BJ (cell line): ENCODE measurements at regions of chr6 and their contacts with region 1.

Region 1: GRCh38 chr6:3251462-3252314 is 7.1 kb upstream of the PSMG4 start:
- DNase-seq: peak; percentile 26
- H3K4me3 ChIP-seq: no peak overlapping the region
- H3K27me3 ChIP-seq: no peaks in the 10 kb centered on the region
- CTCF ChIP-seq: peak; percentile 98

Region 2: GRCh38 chr6:3108746-3109414 is 142.8 kb before region 1 on chr6:
- CTCF ChIA-PET with region 1: interaction called, 5 read pairs
- POLR2A ChIA-PET with region 1: interaction called, 20 read pairs
- DNase-seq: no peak
- H3K4me3 ChIP-seq: no peak overlapping the region
- H3K27me3 ChIP-seq: no peaks in the 10 kb centered on the region
- CTCF ChIP-seq: no peak

Region 3: DNA sequence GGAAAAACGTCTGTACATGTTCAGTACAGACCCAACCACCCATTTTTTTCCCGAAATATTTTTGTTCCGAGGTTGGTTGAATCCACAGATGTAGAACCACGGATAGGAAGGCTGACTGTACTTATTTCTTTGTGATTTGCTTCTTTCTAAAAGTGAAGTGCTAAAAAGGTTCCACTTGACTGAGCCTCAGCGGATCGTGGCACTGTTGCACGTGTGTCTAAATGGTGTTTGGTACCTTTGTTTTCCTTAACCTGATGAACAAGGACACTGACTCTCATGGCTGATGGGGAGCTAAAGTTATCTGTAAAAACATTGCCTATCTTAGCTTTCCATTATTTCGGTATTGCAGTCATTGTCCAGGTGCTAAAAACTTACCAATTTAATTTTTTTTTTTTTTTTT is 127.0 kb before region 1 on chr6:
- CTCF ChIA-PET with region 1: interaction called, 11 read pairs
- POLR2A ChIA-PET with region 1: no interaction called
- DNase-seq: no peak
- H3K4me3 ChIP-seq: no peak overlapping the region
- H3K27me3 ChIP-seq: no peaks in the 10 kb centered on the region
- CTCF ChIP-seq: no peak

Region 4: DNA sequence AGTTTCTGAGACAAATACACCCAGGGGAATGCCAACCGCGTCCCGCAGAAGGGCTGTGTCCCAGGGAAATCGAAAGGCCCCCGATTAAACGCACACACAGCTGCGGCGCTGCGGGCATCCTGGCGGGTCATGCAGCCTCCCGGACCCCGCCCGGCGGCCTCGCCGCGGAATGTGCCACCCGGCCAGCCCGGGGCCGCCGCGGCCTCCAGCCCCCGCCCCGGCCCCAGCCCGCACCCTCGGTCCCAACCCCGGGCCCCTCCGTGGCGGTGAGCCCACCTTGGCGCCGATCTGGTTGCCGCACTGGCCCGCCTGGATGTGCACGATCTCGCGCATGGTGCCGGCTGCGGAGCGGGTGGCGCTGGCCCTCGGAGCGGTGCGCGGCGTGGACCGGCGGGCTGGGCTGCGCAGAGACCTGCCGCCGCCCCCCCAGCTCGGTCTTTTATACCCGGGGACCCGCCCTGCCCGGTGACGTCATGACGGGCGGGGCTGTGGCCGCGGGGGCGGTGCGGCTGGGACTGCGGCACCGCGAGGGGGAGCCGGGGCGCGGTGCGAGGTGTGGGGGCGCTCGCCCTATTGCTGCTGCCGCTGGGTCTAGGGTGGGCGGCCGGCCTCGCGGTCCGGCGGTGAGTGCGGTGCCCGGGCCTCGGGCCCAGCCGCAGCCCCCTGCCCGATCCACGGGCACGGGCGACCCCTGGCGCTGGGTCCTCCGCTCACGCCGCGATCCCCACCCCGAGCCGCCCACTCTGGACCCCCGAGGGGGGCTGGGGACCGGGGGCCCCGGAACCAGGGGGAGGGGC is 94.4 kb before region 1 on chr6 and contains the start of gene TUBB2A:
- CTCF ChIA-PET with region 1: interaction called, 17 read pairs
- POLR2A ChIA-PET with region 1: interaction called, 17 read pairs
- DNase-seq: no peak
- H3K4me3 ChIP-seq: peak within 1 kb of the TSS; percentile 95
- H3K27me3 ChIP-seq: no peaks in the 10 kb centered on the region
- CTCF ChIP-seq: peak; percentile 21; the same call in 1 of the 2 replicates
- polyA plus RNA-seq, gene TUBB2A: 138 and 184 TPM in 2 replicates

Region 5: GRCh38 chr6:3162565-3163247 is 89.0 kb before region 1 on chr6:
- CTCF ChIA-PET with region 1: interaction called, 17 read pairs
- POLR2A ChIA-PET with region 1: interaction called, 17 read pairs
- DNase-seq: no peak
- H3K4me3 ChIP-seq: peak overlapping the region; percentile 74
- H3K27me3 ChIP-seq: no peaks in the 10 kb centered on the region
- CTCF ChIP-seq: peak; percentile 33

Region 6: GRCh38 chr6:3209114-3210023 is 42.3 kb before region 1 on chr6:
- CTCF ChIA-PET with region 1: interaction called, 26 read pairs
- POLR2A ChIA-PET with region 1: interaction called, 7 read pairs
- DNase-seq: peak; percentile 98
- H3K4me3 ChIP-seq: no peak overlapping the region
- H3K27me3 ChIP-seq: no peaks in the 10 kb centered on the region
- CTCF ChIP-seq: peak; percentile 38